HEK293T (cell line): ENCODE measurements at regions of chr15 and their contacts with region 1.

Region 1: GRCh38 chr15:65610871-65611718 is at the start of gene INTS14:
- DNase-seq: peak; percentile 97

Region 2: DNA sequence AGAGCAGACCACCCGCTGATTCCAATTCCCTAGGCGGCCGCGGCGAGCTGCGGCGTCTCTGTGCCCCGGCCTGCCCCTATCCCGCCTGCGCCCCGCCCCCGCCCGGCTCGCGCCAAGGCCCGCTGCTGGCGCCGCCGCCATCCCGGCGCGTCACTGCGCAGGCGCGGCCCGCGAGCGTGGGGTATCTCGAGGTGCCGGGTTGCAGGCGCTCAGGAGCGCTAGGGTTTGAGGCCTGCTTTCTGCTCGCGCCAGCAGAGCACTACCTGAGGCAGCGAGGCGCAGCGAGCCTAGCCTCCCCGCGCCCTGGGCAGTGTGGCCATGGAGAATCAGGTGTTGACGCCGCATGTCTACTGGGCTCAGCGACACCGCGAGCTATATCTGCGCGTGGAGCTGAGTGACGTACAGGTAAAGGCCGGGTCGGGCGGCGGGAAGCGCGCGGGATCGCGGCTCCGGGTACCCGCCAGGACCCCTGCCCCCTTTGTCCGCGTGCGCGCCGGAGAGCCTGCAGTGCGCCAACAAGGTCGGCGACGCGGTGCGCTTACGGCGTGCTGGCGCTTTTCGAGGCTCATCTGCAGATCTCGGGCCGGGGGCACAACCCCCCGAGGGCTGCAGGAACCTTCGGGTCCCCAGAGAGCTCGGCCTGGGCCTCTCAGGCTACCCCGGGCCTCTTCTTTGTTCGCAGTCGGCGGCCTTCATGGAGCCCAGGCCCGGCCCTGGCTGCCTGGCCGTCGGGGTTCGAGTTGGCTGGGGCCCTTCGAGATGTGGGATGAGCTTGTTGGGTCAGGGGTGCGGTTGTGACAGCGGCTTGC is 80.6 kb before region 1 on chr15 and contains the start of gene HACD3:
- CTCF ChIA-PET with region 1: no interaction called
- POLR2A ChIA-PET with region 1: interaction called, 10 read pairs
- DNase-seq: peak; percentile 97

Region 3: GRCh38 chr15:65595960-65596359 is 15.1 kb before region 1 on chr15:
- CTCF ChIA-PET with region 1: interaction called, 3 read pairs
- POLR2A ChIA-PET with region 1: interaction called, 19 read pairs
- DNase-seq: no peak

Region 4: DNA sequence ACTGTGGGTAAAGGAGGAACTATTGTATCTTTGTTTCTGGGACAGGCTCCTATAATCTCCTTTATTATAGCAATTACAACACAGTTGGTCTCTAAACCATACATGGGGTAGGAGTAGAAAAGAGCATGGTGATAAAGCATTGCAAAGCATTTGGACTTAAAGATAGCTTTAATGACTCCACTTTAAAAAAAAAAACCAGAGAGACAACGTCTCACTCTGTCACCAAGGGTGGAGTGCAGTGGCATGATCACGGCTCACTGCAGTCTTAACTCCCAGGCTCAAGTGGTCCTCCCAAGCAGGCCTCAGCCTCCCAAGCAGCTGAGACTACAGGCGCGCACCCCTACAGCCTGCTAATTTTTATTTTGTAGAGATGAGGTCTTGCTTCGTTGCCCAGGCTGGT is 112.8 kb after region 1 on chr15:
- CTCF ChIA-PET with region 1: no interaction called
- POLR2A ChIA-PET with region 1: no interaction called
- DNase-seq: no peak